Activated CD8-positive, alpha-beta memory T cell treated with anti-CD3 and anti-CD28 coated beads, Interleukin-2, amount 10 ng/mL, durations not matched to agents 7 days and 5 days (primary cell): ENCODE measurements at regions of chr5 and their contacts with region 1.

Region 1: GRCh38 chr5:157464519-157465171 is 4.6 kb downstream of the NIPAL4 start:
- DNase-seq: peak; percentile 78
- ATAC-seq: peak; percentile 83
- H3K4me3 Mint-ChIP-seq: peak overlapping the region; percentile 0
- H3K27ac Mint-ChIP-seq: peak overlapping the region; percentile 47
- H3K4me1 Mint-ChIP-seq: peaks cover 32% of the 10 kb centered on the region
- H3K27me3 Mint-ChIP-seq: peaks cover 18% of the 10 kb centered on the region

Region 2: DNA sequence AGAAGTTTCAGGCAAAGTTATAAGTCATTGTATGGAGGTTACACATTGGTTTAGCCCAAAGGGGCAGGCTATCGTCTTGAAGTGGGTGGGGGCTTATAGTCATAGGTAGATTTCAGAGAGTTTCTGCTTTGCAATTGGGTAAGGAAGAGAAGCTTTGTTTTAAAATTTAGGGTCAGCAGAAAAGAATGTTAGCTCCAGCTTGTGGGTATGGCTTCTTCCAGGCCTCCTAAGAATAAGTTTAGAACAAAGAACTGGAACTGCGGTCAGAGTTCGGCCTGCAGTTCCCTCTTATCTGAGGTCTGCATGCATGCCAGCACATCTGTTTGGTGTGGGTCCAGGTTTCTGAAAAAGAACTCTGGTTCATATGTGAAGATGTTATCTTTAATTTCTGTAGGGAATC is 102.6 kb before region 1 on chr5:
- CTCF ChIA-PET with region 1: no interaction called
- DNase-seq: no peak
- ATAC-seq: no peak
- H3K4me3 Mint-ChIP-seq: no peak overlapping the region
- H3K27ac Mint-ChIP-seq: no peak overlapping the region
- H3K4me1 Mint-ChIP-seq: no peaks in the 10 kb centered on the region
- H3K27me3 Mint-ChIP-seq: no peaks in the 10 kb centered on the region

Region 3: GRCh38 chr5:157449011-157449723 is 15.5 kb before region 1 on chr5:
- CTCF ChIA-PET with region 1: interaction called, 14 read pairs
- DNase-seq: peak; percentile 16
- ATAC-seq: no peak
- H3K4me3 Mint-ChIP-seq: no peak overlapping the region
- H3K27ac Mint-ChIP-seq: no peak overlapping the region
- H3K4me1 Mint-ChIP-seq: no peaks in the 10 kb centered on the region
- H3K27me3 Mint-ChIP-seq: peaks cover 6% of the 10 kb centered on the region